PC-3 (cell line): ENCODE measurements at regions of chr4 and their contacts with region 1.

Region 1: GRCh38 chr4:48963042-48963679 is 22.9 kb upstream of the CWH43 start:
- DNase-seq: peak; percentile 88
- ATAC-seq: peak; percentile 81
- H3K4me3 ChIP-seq: no peak overlapping the region
- H3K27ac ChIP-seq: no peak overlapping the region
- H3K4me1 ChIP-seq: peaks cover 19% of the 10 kb centered on the region
- H3K27me3 ChIP-seq: no peaks in the 10 kb centered on the region
- CTCF ChIP-seq: peak; percentile 96

Region 2: GRCh38 chr4:48578132-48578968 is 384.8 kb before region 1 on chr4:
- CTCF ChIA-PET with region 1: interaction called, 5 read pairs
- POLR2A ChIA-PET with region 1: no interaction called
- intact Hi-C with region 1: loop called (anchors 1 kb)
- DNase-seq: peak; percentile 67
- ATAC-seq: peak; percentile 73
- H3K4me3 ChIP-seq: no peak overlapping the region
- H3K27ac ChIP-seq: no peak overlapping the region
- H3K4me1 ChIP-seq: no peaks in the 10 kb centered on the region
- H3K27me3 ChIP-seq: no peaks in the 10 kb centered on the region
- CTCF ChIP-seq: peak; percentile 80

Region 3: DNA sequence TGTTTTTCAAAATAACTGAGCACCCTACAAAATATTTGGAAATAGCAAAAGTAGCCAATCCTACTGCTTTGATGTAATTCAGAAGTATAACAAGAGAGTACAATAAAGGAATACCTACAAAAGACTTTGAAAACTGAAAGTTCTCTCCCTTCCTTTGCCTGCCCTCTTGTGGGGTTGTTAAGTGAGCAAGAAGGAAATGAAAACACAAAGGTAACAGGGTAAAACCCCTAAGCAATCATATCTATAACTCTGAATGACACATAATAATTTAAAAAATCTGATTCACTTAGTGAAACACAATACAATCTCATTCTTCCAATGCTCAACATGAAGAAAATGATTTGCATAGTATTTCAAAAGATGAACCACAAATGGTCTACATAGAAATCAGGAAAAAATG is 281.3 kb before region 1 on chr4:
- CTCF ChIA-PET with region 1: no interaction called
- POLR2A ChIA-PET with region 1: no interaction called
- intact Hi-C with region 1: loop called (anchors 5 kb)
- DNase-seq: peak; percentile 33
- ATAC-seq: peak; percentile 61; the same call in 1 of the 2 replicates
- H3K4me3 ChIP-seq: no peak overlapping the region
- H3K27ac ChIP-seq: no peak overlapping the region
- H3K4me1 ChIP-seq: 0 out of 2 replicates have a peak, but pooled peaks cover 6% of the 10 kb centered on the region
- H3K27me3 ChIP-seq: no peaks in the 10 kb centered on the region
- CTCF ChIP-seq: peak; percentile 64

Region 4: GRCh38 chr4:48779998-48780742 is 183.0 kb before region 1 on chr4 and contains the start of gene FRYL:
- CTCF ChIA-PET with region 1: no interaction called
- POLR2A ChIA-PET with region 1: interaction called, 4 read pairs
- intact Hi-C with region 1: loop called (anchors 2 kb)
- DNase-seq: peak; percentile 97
- ATAC-seq: peak; percentile 92
- H3K4me3 ChIP-seq: peak within 1 kb of the TSS; percentile 79
- H3K27ac ChIP-seq: peak within 1 kb of the TSS; percentile 75
- H3K4me1 ChIP-seq: peaks cover 19% of the 10 kb centered on the region; the same call in 1 of the 2 replicates
- H3K27me3 ChIP-seq: no peaks in the 10 kb centered on the region
- CTCF ChIP-seq: no peak
- total RNA-seq, gene FRYL: 29.9 and 31.3 TPM in 2 replicates

Region 5: DNA sequence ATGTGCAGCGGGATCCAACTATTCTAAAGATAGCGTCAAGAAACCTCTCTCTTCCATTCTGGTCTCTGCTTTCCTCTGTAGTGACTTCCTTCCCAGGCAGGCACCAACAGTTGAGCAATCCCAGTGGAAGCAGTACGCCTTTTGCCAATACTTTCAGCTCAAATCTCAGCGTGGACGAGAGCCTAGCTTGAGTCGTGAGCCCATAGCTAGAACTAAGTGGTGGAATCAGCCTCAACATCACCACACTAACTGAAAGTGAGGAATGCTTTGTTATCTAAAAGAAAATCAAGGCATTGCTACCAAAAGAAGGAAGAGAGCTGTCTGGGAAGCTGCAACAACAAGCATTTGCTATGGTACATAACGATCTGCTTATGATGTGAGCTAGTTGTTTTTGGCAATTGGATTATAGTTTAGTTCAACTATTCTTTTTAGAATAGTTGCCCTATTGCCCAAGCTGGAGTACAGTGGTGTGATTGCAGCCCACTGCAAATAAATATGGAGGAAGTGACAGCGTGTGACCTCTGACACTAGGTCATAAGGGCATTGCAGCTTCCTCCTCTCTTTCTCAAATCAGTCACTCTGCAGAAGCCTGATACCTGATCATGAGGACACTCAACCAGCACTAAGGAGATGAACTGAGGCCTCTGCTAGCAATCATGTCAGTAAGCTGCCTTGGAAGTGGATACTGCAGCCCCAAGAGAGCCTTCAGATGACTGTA is 158.4 kb before region 1 on chr4:
- CTCF ChIA-PET with region 1: no interaction called
- POLR2A ChIA-PET with region 1: no interaction called
- intact Hi-C with region 1: no loop called
- DNase-seq: no peak
- ATAC-seq: no peak
- H3K4me3 ChIP-seq: no peak overlapping the region
- H3K27ac ChIP-seq: no peak overlapping the region
- H3K4me1 ChIP-seq: peaks cover 19% of the 10 kb centered on the region
- H3K27me3 ChIP-seq: no peaks in the 10 kb centered on the region
- CTCF ChIP-seq: no peak

Region 6: GRCh38 chr4:48906206-48907173 is 56.7 kb before region 1 on chr4 and contains the start of gene OCIAD2:
- CTCF ChIA-PET with region 1: no interaction called
- POLR2A ChIA-PET with region 1: no interaction called
- intact Hi-C with region 1: loop called (anchors 2 kb)
- DNase-seq: peak; percentile 66
- ATAC-seq: peak; percentile 54
- H3K4me3 ChIP-seq: peak within 1 kb of the TSS; percentile 94
- H3K27ac ChIP-seq: peak within 1 kb of the TSS; percentile 25
- H3K4me1 ChIP-seq: peaks cover 42% of the 10 kb centered on the region
- H3K27me3 ChIP-seq: no peaks in the 10 kb centered on the region
- CTCF ChIP-seq: peak; percentile 45
- total RNA-seq, gene OCIAD2: 169 and 255 TPM in 2 replicates

Region 7: DNA sequence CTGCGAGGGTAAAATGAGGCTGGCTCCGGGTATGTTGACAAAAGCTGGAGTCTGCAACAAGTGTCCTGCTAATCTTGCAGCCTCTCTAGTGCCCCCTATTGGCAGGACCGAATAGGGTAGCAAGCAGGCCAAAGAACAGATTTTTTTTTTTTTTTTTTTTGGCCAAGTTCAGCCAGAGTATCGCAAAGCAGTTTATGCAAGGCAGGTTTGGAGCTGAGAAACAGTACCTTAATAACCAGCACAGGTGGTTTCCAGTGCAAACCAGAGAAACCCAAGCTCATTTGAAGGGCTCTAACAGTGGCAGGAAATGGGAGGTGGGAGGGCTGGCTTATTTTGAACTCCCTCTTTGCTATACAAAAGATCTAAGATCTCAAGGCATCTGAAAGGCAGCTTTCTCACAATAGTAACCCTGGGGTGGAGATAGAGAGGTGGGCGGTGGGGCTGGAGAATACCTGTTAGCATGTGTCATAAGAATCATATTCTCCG is 18.4 kb before region 1 on chr4:
- CTCF ChIA-PET with region 1: no interaction called
- POLR2A ChIA-PET with region 1: no interaction called
- intact Hi-C with region 1: loop called (anchors 1 kb)
- DNase-seq: peak; percentile 30
- ATAC-seq: no peak; the same call in 1 of the 2 replicates
- H3K4me3 ChIP-seq: peak overlapping the region; percentile 38
- H3K27ac ChIP-seq: peak overlapping the region; percentile 95
- H3K4me1 ChIP-seq: peaks cover 43% of the 10 kb centered on the region
- H3K27me3 ChIP-seq: no peaks in the 10 kb centered on the region
- CTCF ChIP-seq: peak; percentile 73

Region 8: DNA sequence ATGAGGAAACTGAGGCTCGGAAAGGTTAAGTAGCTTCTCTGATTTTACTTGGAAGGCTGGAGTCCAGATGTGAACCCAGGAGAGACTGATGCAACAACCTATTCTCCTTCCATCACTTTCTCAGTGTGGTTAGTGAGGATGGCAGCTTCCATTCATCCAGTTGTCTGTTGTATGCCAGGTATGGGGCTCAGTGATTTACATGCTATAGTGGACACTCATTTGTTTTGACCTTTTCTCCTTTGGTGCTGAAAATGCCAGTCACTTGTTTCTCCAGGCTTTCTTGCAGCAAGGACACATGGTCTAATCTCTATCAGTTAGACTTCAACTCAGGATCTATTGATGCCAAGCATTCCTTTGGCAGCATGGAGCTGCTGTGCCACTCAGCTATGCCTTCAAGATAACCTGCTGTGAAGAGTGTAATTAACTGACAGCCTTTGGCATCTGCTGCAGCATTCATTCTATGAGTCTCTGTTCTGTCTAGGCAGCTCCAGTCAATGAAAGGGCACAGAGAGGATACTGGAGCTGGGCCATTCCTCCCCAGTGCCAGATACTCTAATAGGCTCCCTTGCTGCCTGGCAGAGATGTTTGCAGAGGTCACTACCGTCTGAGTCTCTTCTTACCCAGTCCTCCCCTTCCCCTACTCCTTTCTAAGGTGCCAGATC is 11.9 kb after region 1 on chr4:
- CTCF ChIA-PET with region 1: no interaction called
- POLR2A ChIA-PET with region 1: no interaction called
- intact Hi-C with region 1: no loop called
- DNase-seq: no peak
- ATAC-seq: no peak
- H3K4me3 ChIP-seq: no peak overlapping the region
- H3K27ac ChIP-seq: no peak overlapping the region
- H3K4me1 ChIP-seq: peaks cover 15% of the 10 kb centered on the region
- H3K27me3 ChIP-seq: no peaks in the 10 kb centered on the region
- CTCF ChIP-seq: no peak